ENCODE measurements at regions of chr5 and their contacts with region 1.

Region 1: GRCh38 chr5:141636413-141637122 is at the starts of genes HDAC3 and RELL2:
- DNase-seq: peak; percentile 88 to 97 (median 94)
- ATAC-seq: peak; percentile 86
- H3K4me3 ChIP-seq: peak within 1 kb of the TSS; percentile 97
- H3K4me3 Mint-ChIP-seq: peak within 1 kb of the TSS; percentile 92
- H3K27ac ChIP-seq: peak within 1 kb of the TSS; percentile 77 to 79
- H3K27ac Mint-ChIP-seq: peak within 1 kb of the TSS; percentile 89
- H3K4me1 ChIP-seq: peaks cover 42% of the 10 kb centered on the region
- H3K4me1 Mint-ChIP-seq: peaks cover 45% of the 10 kb centered on the region
- H3K27me3 ChIP-seq: no peaks in the 10 kb centered on the region
- H3K27me3 Mint-ChIP-seq: no peaks in the 10 kb centered on the region
- CTCF ChIP-seq: no peak
- total RNA-seq, gene HDAC3: 51.1 to 52.7 TPM
- total RNA-seq, gene RELL2: 10.9 to 11.4 TPM

Region 2: GRCh38 chr5:141369994-141370848 is 266.3 kb before region 1 on chr5 and contains the start of gene PCDHGB3:
- CTCF ChIA-PET with region 1: no interaction called
- POLR2A ChIA-PET with region 1: no interaction called
- intact Hi-C with region 1: no loop called
- DNase-seq: peak in 9 of 14 experiments; percentile 4 to 61 (median 28)
- ATAC-seq: peak; percentile 83
- H3K4me3 ChIP-seq: peak within 1 kb of the TSS; percentile 36
- H3K4me3 Mint-ChIP-seq: peak within 1 kb of the TSS; percentile 80
- H3K27ac ChIP-seq: no peak within 1 kb of the TSS
- H3K27ac Mint-ChIP-seq: no peak within 1 kb of the TSS
- H3K4me1 ChIP-seq: peaks cover 8% of the 10 kb centered on the region
- H3K4me1 Mint-ChIP-seq: peaks cover 11% of the 10 kb centered on the region
- H3K27me3 ChIP-seq: peaks cover 71 to 76% of the 10 kb centered on the region in 2 experiments
- H3K27me3 Mint-ChIP-seq: peaks cover 91% of the 10 kb centered on the region
- CTCF ChIP-seq: no peak
- total RNA-seq, gene PCDHGB3: 0.11 to 0.28 TPM

Region 3: GRCh38 chr5:141564216-141564692 is 72.3 kb before region 1 on chr5:
- CTCF ChIA-PET with region 1: interaction called, 17 read pairs
- POLR2A ChIA-PET with region 1: interaction called, 8 read pairs
- intact Hi-C with region 1: no loop called
- DNase-seq: peak; percentile 14 to 94 (median 48)
- ATAC-seq: peak; percentile 97
- H3K4me3 ChIP-seq: no peak overlapping the region
- H3K4me3 Mint-ChIP-seq: no peak overlapping the region
- H3K27ac ChIP-seq: peak overlapping the region; percentile 37 to 66
- H3K27ac Mint-ChIP-seq: peak overlapping the region; percentile 40
- H3K4me1 ChIP-seq: peaks cover 3% of the 10 kb centered on the region
- H3K4me1 Mint-ChIP-seq: peaks cover 39% of the 10 kb centered on the region
- H3K27me3 ChIP-seq: no peaks in the 10 kb centered on the region
- H3K27me3 Mint-ChIP-seq: no peaks in the 10 kb centered on the region
- CTCF ChIP-seq: peak; percentile 98

Region 4: GRCh38 chr5:141598391-141599350 is 37.9 kb before region 1 on chr5:
- CTCF ChIA-PET with region 1: interaction called, 43 read pairs
- POLR2A ChIA-PET with region 1: interaction called, 13 read pairs
- intact Hi-C with region 1: loop called in 1 of 2 experiments (anchors 5 kb)
- DNase-seq: peak in 1 of 14 experiments; percentile 52
- ATAC-seq: peak; percentile 62
- H3K4me3 ChIP-seq: no peak overlapping the region
- H3K4me3 Mint-ChIP-seq: peak overlapping the region; percentile 35
- H3K27ac ChIP-seq: peak overlapping the region in 1 of 2 donors; percentile 75
- H3K27ac Mint-ChIP-seq: peak overlapping the region; percentile 91
- H3K4me1 ChIP-seq: peaks cover 70% of the 10 kb centered on the region
- H3K4me1 Mint-ChIP-seq: peaks cover 80% of the 10 kb centered on the region
- H3K27me3 ChIP-seq: no peaks in the 10 kb centered on the region
- H3K27me3 Mint-ChIP-seq: no peaks in the 10 kb centered on the region
- CTCF ChIP-seq: no peak

Region 5: DNA sequence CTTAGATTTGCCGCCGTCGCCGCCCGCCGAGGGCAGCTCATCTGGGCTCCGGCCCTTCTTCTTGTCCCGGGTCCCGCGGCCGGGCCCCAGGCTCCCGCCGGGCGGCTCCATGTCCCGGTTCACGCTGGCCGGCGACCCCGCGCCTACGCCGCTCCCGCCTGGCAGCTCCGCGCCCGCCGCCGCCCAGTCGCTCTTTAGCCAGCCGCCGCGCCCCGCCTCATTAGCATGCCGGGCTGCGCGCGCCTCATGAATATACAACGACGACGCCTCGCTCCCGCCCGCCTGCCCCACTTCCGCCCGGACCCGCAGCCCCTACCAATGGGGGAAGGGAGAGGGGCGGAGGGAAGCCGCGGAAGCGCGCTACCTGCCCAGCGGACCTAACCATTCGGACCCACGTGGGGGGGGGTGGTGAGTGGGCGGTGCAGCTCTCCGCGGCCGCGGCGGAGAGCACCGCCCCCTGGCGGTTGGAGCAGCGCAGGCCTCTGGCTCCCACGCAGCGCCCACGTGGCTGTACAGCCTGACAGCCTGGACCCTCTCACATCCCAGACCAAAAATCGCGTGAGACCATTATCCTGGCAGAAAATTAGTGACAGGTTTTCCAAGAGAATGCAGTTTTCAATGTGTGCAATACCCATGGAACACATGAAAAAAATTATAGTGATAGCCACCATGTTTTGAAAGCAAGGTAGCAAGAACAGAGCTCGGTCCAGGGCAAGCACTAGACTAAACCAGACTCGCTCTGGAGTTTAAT is 17.6 kb before region 1 on chr5 and contains the start of gene DIAPH1:
- CTCF ChIA-PET with region 1: interaction called, 77 read pairs
- POLR2A ChIA-PET with region 1: interaction called, 100 read pairs
- intact Hi-C with region 1: loop called (anchors 1 to 2 kb)
- DNase-seq: peak; percentile 95 to 99 (median 98)
- ATAC-seq: peak; percentile 90
- H3K4me3 ChIP-seq: peak within 1 kb of the TSS; percentile 96
- H3K4me3 Mint-ChIP-seq: peak within 1 kb of the TSS; percentile 98
- H3K27ac ChIP-seq: peak within 1 kb of the TSS; percentile 91 to 94
- H3K27ac Mint-ChIP-seq: peak within 1 kb of the TSS; percentile 92
- H3K4me1 ChIP-seq: peaks cover 25% of the 10 kb centered on the region
- H3K4me1 Mint-ChIP-seq: peaks cover 66% of the 10 kb centered on the region
- H3K27me3 ChIP-seq: no peaks in the 10 kb centered on the region
- H3K27me3 Mint-ChIP-seq: no peaks in the 10 kb centered on the region
- CTCF ChIP-seq: peak; percentile 86
- total RNA-seq, gene DIAPH1: 159 to 161 TPM

Region 6: DNA sequence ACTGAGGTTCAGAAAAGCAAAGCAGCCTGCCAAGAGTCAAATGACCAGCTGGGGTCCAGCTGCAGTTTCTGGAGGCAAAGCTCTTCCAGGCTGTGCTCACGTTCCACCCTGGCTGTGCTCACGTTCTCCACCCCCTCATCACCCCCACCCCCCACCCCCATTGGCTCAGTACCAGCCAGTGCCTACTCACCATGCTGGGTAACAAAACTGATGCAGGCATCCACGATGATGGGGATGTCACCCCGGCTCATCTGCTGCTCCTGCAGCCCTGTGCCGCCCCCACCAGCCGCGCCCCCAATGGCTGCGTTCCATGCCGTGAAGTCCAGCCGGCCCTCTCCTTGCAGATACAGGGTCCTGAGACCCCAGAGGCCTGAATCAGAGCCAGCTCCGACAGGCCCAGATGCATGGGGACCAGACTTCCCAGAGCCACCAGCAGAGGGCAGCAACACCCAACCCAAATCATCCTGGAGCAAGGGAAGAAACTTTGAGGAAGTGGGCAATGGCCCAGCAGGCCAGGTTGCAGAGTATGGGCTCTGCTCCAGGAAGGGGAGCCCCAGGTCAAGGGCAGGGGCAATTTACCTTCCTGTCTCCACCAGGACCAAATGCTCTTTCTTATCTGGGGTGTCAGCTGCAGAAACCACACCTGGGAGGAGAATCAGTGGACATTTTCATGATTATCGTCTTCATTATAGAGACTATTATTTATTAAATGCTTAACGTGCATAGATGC is 28.3 kb after region 1 on chr5:
- CTCF ChIA-PET with region 1: interaction called, 11 read pairs
- POLR2A ChIA-PET with region 1: interaction called, 5 read pairs
- intact Hi-C with region 1: no loop called
- DNase-seq: peak; percentile 36 to 87 (median 70)
- ATAC-seq: peak; percentile 74
- H3K4me3 ChIP-seq: no peak overlapping the region
- H3K4me3 Mint-ChIP-seq: no peak overlapping the region
- H3K27ac ChIP-seq: no peak overlapping the region
- H3K27ac Mint-ChIP-seq: no peak overlapping the region
- H3K4me1 ChIP-seq: peaks cover 4% of the 10 kb centered on the region
- H3K4me1 Mint-ChIP-seq: no peaks in the 10 kb centered on the region
- H3K27me3 ChIP-seq: no peaks in the 10 kb centered on the region
- H3K27me3 Mint-ChIP-seq: no peaks in the 10 kb centered on the region
- CTCF ChIP-seq: peak; percentile 96

Region 7: DNA sequence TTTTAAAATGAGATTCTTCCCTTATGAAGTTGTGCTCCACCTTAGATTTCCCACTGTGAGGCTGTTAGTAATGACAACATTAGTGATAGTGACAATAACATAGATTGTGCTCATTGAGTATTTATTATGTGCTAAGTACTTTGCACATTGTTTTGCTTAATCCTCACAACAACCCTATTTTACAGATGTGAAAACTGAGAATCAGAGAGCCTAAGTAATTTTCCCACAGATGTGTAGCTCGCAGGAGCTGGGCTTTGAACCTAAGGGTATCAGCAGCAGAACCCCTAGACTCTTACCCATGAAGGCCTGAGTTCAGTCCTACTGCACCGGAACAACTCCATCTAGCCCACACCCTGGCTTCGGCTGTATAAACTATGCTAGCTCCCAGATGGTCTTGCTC is 61.0 kb after region 1 on chr5:
- CTCF ChIA-PET with region 1: no interaction called
- POLR2A ChIA-PET with region 1: no interaction called
- intact Hi-C with region 1: no loop called
- DNase-seq: no peak
- ATAC-seq: no peak
- H3K4me3 ChIP-seq: no peak overlapping the region
- H3K4me3 Mint-ChIP-seq: no peak overlapping the region
- H3K27ac ChIP-seq: no peak overlapping the region
- H3K27ac Mint-ChIP-seq: no peak overlapping the region
- H3K4me1 ChIP-seq: peaks cover 26% of the 10 kb centered on the region
- H3K4me1 Mint-ChIP-seq: peaks cover 25% of the 10 kb centered on the region
- H3K27me3 ChIP-seq: peaks cover 20 to 33% of the 10 kb centered on the region in 2 experiments
- H3K27me3 Mint-ChIP-seq: peaks cover 64% of the 10 kb centered on the region
- CTCF ChIP-seq: no peak